ENCODE measurements at regions of chr15 and their contacts with region 1.

Region 1: DNA sequence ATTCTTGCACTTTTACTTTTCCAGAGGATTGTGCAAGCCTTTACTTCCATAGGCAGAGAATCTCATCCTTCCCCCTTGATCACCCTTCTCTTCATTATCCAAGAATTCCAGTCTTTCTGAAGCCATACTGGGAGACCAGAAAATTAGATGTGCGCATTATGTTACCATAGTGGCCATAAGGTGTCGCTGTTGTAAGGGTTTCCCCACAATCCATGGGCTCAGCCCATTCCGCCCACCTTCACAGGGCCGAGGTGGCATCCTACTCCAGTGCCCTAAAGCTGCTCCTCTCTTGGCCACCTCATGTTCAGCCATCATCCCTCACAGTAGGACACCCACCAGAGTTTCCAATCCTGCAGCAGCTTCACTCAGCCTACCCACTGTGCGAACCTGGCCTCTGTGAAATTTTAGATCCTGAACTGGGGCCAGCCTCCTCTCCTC is 35.0 kb downstream of the CTSH start:
- DNase-seq: peak; percentile 52
- H3K4me3 ChIP-seq: no peak overlapping the region
- H3K27ac ChIP-seq: no peak overlapping the region
- H3K4me1 ChIP-seq: no peaks in the 10 kb centered on the region
- H3K27me3 ChIP-seq: no peaks in the 10 kb centered on the region
- CTCF ChIP-seq: peak; percentile 61 to 65
- POLR2A ChIP-seq: no peak

Region 2: GRCh38 chr15:78922527-78923414 is 13.0 kb after region 1 on chr15:
- CTCF ChIA-PET with region 1: interaction called, 16 read pairs
- POLR2A ChIA-PET with region 1: no interaction called
- dilution Hi-C with region 1: no loop called
- intact Hi-C with region 1: no loop called
- DNase-seq: no peak
- H3K4me3 ChIP-seq: no peak overlapping the region
- H3K27ac ChIP-seq: no peak overlapping the region
- H3K4me1 ChIP-seq: no peaks in the 10 kb centered on the region
- H3K27me3 ChIP-seq: no peaks in the 10 kb centered on the region
- CTCF ChIP-seq: no peak
- POLR2A ChIP-seq: no peak

Region 3: DNA sequence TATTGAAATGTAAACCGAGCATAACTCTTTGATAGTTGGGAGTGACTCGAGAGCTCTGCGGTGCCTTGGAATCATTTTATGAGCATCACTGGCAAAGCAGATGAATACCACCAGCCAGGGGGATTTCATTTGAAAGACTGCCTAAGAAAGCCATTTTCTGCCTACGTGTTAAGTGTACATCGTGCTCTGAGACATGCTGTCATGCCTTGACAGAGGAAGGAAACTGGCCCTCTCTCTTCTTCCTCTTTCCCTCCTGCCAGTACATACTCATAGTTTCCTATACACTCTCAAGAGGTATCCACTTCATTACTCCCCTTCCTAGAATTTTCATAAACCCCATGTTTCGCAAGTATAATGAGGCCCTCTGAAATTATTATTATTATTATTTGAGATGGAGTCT is 1052.4 kb after region 1 on chr15:
- CTCF ChIA-PET with region 1: no interaction called
- POLR2A ChIA-PET with region 1: no interaction called
- dilution Hi-C with region 1: no loop called
- intact Hi-C with region 1: no loop called
- DNase-seq: no peak
- H3K4me3 ChIP-seq: no peak overlapping the region
- H3K27ac ChIP-seq: no peak overlapping the region
- H3K4me1 ChIP-seq: no peaks in the 10 kb centered on the region
- H3K27me3 ChIP-seq: no peaks in the 10 kb centered on the region
- CTCF ChIP-seq: no peak
- POLR2A ChIP-seq: no peak